Heart left ventricle (tissue), 16 donors: ENCODE measurements at regions of chr19 and their contacts with region 1.

Region 1: GRCh38 chr19:48271531-48272151 is 1.8 kb downstream of the ZNF114 start:
- DNase-seq: peak; percentile 39 to 60 (median 49)
- ATAC-seq: peak; percentile 56 to 82 (median 77)
- H3K4me3 ChIP-seq: peak overlapping the region; percentile 39 to 73 (median 57)
- H3K27ac ChIP-seq: peak overlapping the region; percentile 25 to 81 (median 62)
- H3K4me1 ChIP-seq: peaks cover 0 to 16% (median 8%) of the 10 kb centered on the region in 12 donors
- H3K27me3 ChIP-seq: peaks cover 0 to 5% (median 0%) of the 10 kb centered on the region in 9 donors
- CTCF ChIP-seq: no peak
- POLR2A ChIP-seq: no peak

Region 2: GRCh38 chr19:48290771-48291488 is 19.3 kb after region 1 on chr19:
- intact Hi-C with region 1: loop called in 9 of 10 experiments (anchors 1 to 2 kb)
- DNase-seq: peak; percentile 76 to 89 (median 80)
- ATAC-seq: peak; percentile 63 to 94 (median 88)
- H3K4me3 ChIP-seq: peak overlapping the region; percentile 31 to 59 (median 48)
- H3K27ac ChIP-seq: peak overlapping the region in 3 of 12 donors; percentile 4 to 51 (median 41)
- H3K4me1 ChIP-seq: peaks cover 0 to 15% (median 10%) of the 10 kb centered on the region in 12 donors
- H3K27me3 ChIP-seq: peaks cover 0 to 3% (median 0%) of the 10 kb centered on the region in 9 donors
- CTCF ChIP-seq: peak; percentile 94 to 99 (median 97)
- POLR2A ChIP-seq: peak in 1 of 2 donors; percentile 22

Region 3: GRCh38 chr19:48308631-48309586 is 37.3 kb after region 1 on chr19:
- intact Hi-C with region 1: loop called in 1 of 10 experiments (anchors 5 kb)
- DNase-seq: no peak
- ATAC-seq: peak in 3 of 4 donors; percentile 23 to 55 (median 31)
- H3K4me3 ChIP-seq: no peak overlapping the region
- H3K27ac ChIP-seq: peak overlapping the region in 7 of 12 donors; percentile 55 to 71 (median 67)
- H3K4me1 ChIP-seq: peaks cover 0 to 26% (median 15%) of the 10 kb centered on the region in 12 donors
- H3K27me3 ChIP-seq: no peaks in the 10 kb centered on the region
- CTCF ChIP-seq: peak in 6 of 12 donors; percentile 10 to 26 (median 15)
- POLR2A ChIP-seq: no peak

Region 4: GRCh38 chr19:48333467-48334384 is 62.1 kb after region 1 on chr19:
- intact Hi-C with region 1: loop called in 3 of 10 experiments (anchors 2 to 10 kb)
- DNase-seq: peak; percentile 88 to 97 (median 93)
- ATAC-seq: peak; percentile 68 to 87 (median 86)
- H3K4me3 ChIP-seq: peak overlapping the region; percentile 9 to 63 (median 50)
- H3K27ac ChIP-seq: peak overlapping the region; percentile 51 to 93 (median 87)
- H3K4me1 ChIP-seq: peaks cover 0 to 57% (median 25%) of the 10 kb centered on the region in 12 donors
- H3K27me3 ChIP-seq: no peaks in the 10 kb centered on the region
- CTCF ChIP-seq: peak; percentile 72 to 96 (median 87)
- POLR2A ChIP-seq: no peak

Region 5: GRCh38 chr19:48582168-48582567 is 310.5 kb after region 1 on chr19:
- intact Hi-C with region 1: loop called in 6 of 10 experiments (anchors 1 to 10 kb)
- DNase-seq: no peak
- ATAC-seq: no peak
- H3K4me3 ChIP-seq: no peak overlapping the region
- H3K27ac ChIP-seq: no peak overlapping the region
- H3K4me1 ChIP-seq: peaks cover 0 to 14% (median 5%) of the 10 kb centered on the region in 12 donors
- H3K27me3 ChIP-seq: no peaks in the 10 kb centered on the region
- CTCF ChIP-seq: no peak
- POLR2A ChIP-seq: no peak